Transverse colon (tissue), 4 donors: ENCODE measurements at regions of chr21 and their contacts with region 1.

Region 1: GRCh38 chr21:32044205-32045180 is 171.7 kb downstream of the HUNK start:
- DNase-seq: no peak
- H3K4me3 ChIP-seq: no peak overlapping the region
- H3K27ac ChIP-seq: no peak overlapping the region
- H3K4me1 ChIP-seq: no peaks in the 10 kb centered on the region
- H3K27me3 ChIP-seq: no peaks in the 10 kb centered on the region
- CTCF ChIP-seq: no peak
- EP300 ChIP-seq: no peak
- POLR2A ChIP-seq: no peak

Region 2: GRCh38 chr21:31618696-31619430 is 425.6 kb before region 1 on chr21:
- in situ Hi-C with region 1: no loop called
- intact Hi-C with region 1: no loop called
- DNase-seq: no peak
- H3K4me3 ChIP-seq: no peak overlapping the region
- H3K27ac ChIP-seq: no peak overlapping the region
- H3K4me1 ChIP-seq: no peaks in the 10 kb centered on the region
- H3K27me3 ChIP-seq: no peaks in the 10 kb centered on the region
- CTCF ChIP-seq: no peak
- EP300 ChIP-seq: no peak
- POLR2A ChIP-seq: no peak

Region 3: GRCh38 chr21:32782698-32783097 is 738.2 kb after region 1 on chr21:
- in situ Hi-C with region 1: no loop called
- intact Hi-C with region 1: no loop called
- DNase-seq: no peak
- H3K4me3 ChIP-seq: no peak overlapping the region
- H3K27ac ChIP-seq: no peak overlapping the region
- H3K4me1 ChIP-seq: peaks cover 0 to 3% (median 2%) of the 10 kb centered on the region in 4 donors
- H3K27me3 ChIP-seq: no peaks in the 10 kb centered on the region
- CTCF ChIP-seq: peak in 4 of 5 experiments; percentile 10 to 21 (median 18)
- EP300 ChIP-seq: no peak
- POLR2A ChIP-seq: no peak

Region 4: GRCh38 chr21:32794644-32795079 is 750.2 kb after region 1 on chr21:
- in situ Hi-C with region 1: no loop called
- intact Hi-C with region 1: loop called (anchors 5 kb)
- DNase-seq: no peak
- H3K4me3 ChIP-seq: no peak overlapping the region
- H3K27ac ChIP-seq: no peak overlapping the region
- H3K4me1 ChIP-seq: no peaks in the 10 kb centered on the region
- H3K27me3 ChIP-seq: no peaks in the 10 kb centered on the region
- CTCF ChIP-seq: no peak
- EP300 ChIP-seq: no peak
- POLR2A ChIP-seq: no peak